Activated CD8-positive, alpha-beta T cell treated with anti-CD3 and anti-CD28 coated beads, Interleukin-2, amount 10 ng/mL, durations not matched to agents 7 days and 5 days (primary cell): ENCODE measurements at regions of chr15 and their contacts with region 1.

Region 1: GRCh38 chr15:90886041-90886614 is 1.8 kb downstream of the FES start:
- DNase-seq: peak; percentile 86
- ATAC-seq: peak; percentile 76
- H3K4me3 Mint-ChIP-seq: peak overlapping the region; percentile 52
- H3K27ac Mint-ChIP-seq: peak overlapping the region; percentile 79
- H3K4me1 Mint-ChIP-seq: peaks cover 42% of the 10 kb centered on the region
- H3K27me3 Mint-ChIP-seq: no peaks in the 10 kb centered on the region

Region 2: DNA sequence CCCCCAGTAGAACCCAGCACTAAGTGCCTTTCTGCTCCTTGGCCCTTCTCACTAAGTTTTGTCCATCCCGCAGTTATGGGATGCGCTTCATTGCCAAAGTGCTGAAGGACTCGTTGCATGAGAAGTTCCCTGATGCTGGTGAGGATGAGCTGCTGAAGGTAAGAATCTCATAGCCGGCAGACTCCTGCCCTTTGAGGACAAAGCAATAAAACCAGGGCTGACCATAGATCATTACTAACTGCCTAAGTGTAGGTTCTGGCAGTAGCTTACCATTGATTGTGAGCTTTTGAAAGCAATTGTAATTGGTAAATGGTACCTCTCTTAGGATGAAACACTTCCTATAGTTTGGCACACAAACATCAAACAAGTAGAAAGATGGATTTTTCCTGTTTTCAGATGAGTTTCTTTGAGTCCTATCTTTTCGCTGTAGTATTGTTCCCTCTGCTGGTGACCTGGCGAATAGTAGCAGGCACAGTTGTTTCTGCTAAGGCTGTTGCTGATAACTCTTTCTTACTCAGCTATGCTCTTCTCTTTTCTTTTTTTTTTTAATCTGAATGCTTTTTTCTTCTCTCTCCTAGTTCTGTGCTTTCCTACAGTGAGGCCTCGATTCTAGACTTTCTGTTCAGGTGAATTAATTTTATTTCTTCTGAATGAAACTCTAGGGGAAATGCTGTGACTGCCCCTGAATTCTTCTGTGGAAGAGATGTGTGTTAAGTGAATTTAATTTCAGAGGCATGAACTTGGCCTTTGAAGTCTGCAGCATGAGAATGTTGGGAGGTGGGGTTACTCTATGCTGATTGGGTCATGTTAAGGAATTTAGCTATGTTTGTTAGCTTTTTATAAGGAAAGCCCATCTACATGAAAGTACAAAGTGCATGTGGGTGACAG is 403.8 kb before region 1 on chr15:
- CTCF ChIA-PET with region 1: interaction called, 15 read pairs
- POLR2A ChIA-PET with region 1: no interaction called
- DNase-seq: peak; percentile 59
- ATAC-seq: no peak
- H3K4me3 Mint-ChIP-seq: no peak overlapping the region
- H3K27ac Mint-ChIP-seq: peak overlapping the region; percentile 22
- H3K4me1 Mint-ChIP-seq: peaks cover 38% of the 10 kb centered on the region
- H3K27me3 Mint-ChIP-seq: no peaks in the 10 kb centered on the region

Region 3: GRCh38 chr15:90654233-90655124 is 231.6 kb before region 1 on chr15:
- CTCF ChIA-PET with region 1: interaction called, 18 read pairs
- POLR2A ChIA-PET with region 1: no interaction called
- DNase-seq: peak; percentile 64
- ATAC-seq: peak; percentile 50
- H3K4me3 Mint-ChIP-seq: peak overlapping the region; percentile 8
- H3K27ac Mint-ChIP-seq: peak overlapping the region; percentile 87
- H3K4me1 Mint-ChIP-seq: peaks cover 81% of the 10 kb centered on the region
- H3K27me3 Mint-ChIP-seq: no peaks in the 10 kb centered on the region

Region 4: GRCh38 chr15:90729261-90729660 is 156.9 kb before region 1 on chr15:
- CTCF ChIA-PET with region 1: interaction called, 11 read pairs
- POLR2A ChIA-PET with region 1: interaction called, 3 read pairs
- DNase-seq: no peak
- ATAC-seq: no peak
- H3K4me3 Mint-ChIP-seq: no peak overlapping the region
- H3K27ac Mint-ChIP-seq: no peak overlapping the region
- H3K4me1 Mint-ChIP-seq: peaks cover 13% of the 10 kb centered on the region
- H3K27me3 Mint-ChIP-seq: no peaks in the 10 kb centered on the region

Region 5: DNA sequence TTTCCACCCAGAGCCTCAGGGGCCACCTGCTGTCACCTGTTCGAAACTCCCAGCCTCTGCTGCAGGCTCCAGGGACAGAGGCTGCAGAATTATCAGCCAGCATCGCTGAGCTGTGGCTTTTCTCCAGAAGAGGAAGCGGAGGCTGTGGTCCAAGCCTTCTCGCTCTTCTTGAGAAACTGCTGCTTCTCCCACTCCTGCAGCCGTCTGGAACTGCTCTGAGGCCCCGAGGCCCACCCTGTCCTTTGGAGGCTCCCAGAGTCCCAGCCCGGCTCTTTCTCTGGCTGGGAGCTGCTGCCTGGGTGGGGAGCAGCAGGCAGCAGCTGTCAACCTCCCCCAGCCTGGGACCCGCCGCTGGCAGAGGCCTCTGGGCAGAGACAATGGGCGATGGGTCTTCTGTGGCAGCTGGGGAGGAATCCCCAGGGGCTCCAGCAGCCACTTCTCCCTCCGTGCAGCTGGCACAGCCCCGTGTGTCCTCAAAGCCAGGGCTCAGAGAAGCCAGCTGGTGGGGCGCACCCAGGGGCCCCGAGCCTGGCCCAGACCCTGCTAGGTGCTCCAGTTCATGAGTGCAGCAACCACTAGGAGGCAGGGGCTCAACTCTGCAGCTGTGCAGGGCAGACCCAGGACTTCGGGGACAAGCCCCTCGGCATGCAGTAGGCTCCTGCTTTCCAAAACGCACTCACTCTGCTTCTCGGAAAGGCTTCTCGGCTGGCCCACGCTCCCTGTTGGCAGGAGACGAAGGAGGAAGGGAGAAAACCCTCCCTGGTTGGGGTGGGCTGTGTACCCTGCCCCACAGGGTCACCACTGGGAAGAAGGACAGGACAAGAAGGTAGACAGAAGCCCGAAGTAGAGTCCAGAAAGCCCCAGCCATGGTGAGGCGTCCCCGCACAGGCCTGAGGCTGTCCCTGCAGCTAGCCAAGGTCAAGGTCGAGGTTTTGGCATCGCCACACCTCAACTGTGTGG is 67.6 kb before region 1 on chr15:
- CTCF ChIA-PET with region 1: interaction called, 50 read pairs
- POLR2A ChIA-PET with region 1: interaction called, 3 read pairs
- DNase-seq: peak; percentile 45
- ATAC-seq: peak; percentile 50
- H3K4me3 Mint-ChIP-seq: peak overlapping the region; percentile 56
- H3K27ac Mint-ChIP-seq: peak overlapping the region; percentile 87
- H3K4me1 Mint-ChIP-seq: peaks cover 77% of the 10 kb centered on the region
- H3K27me3 Mint-ChIP-seq: no peaks in the 10 kb centered on the region

Region 6: DNA sequence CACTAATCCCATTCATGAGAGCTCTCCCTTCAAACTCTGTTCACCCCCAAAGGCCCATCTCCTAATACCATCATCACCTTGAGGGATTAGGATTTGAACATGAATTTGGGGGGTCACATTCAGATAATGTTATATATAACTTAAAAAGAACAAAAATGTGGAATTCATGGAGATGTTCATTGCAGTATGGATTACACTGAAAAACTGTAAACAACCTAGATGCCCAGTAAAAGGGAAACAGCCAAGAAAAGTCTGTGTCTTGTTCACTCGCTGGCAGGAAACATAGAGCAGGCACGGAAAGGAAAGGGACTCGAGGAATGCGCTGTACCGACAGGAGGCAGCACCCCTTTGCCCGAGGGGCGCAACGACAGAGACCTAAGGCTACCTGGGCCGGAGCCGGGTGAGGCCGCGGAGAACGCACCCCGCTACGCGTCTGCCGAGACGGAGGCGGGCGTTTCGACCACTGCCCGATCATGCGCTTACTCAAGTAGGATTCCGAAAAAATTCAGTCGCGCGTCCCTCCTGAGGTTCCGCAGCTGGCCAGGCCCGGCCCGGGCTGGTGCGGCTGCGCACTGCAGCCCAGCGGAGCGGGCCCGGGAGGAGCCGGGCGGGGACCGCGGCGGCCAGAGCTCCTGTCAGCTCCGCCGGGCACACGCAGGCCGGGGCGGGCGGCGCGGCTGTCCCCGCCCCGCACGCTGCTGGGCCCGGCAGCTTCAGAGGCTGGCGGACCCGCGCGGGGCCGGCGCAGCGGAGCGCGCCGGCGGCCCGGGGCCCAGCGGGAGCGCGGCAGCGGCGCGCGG is 16.1 kb after region 1 on chr15:
- CTCF ChIA-PET with region 1: interaction called, 21 read pairs
- POLR2A ChIA-PET with region 1: no interaction called
- DNase-seq: peak; percentile 80
- ATAC-seq: peak; percentile 84
- H3K4me3 Mint-ChIP-seq: peak overlapping the region; percentile 90
- H3K27ac Mint-ChIP-seq: peak overlapping the region; percentile 93
- H3K4me1 Mint-ChIP-seq: peaks cover 28% of the 10 kb centered on the region
- H3K27me3 Mint-ChIP-seq: no peaks in the 10 kb centered on the region

Region 7: GRCh38 chr15:91498046-91498748 is 612.1 kb after region 1 on chr15:
- CTCF ChIA-PET with region 1: no interaction called
- POLR2A ChIA-PET with region 1: no interaction called
- DNase-seq: no peak
- ATAC-seq: no peak
- H3K4me3 Mint-ChIP-seq: no peak overlapping the region
- H3K27ac Mint-ChIP-seq: no peak overlapping the region
- H3K4me1 Mint-ChIP-seq: no peaks in the 10 kb centered on the region
- H3K27me3 Mint-ChIP-seq: peaks cover 9% of the 10 kb centered on the region